ENCODE measurements at regions of chr5 and their contacts with region 1.

Region 1: DNA sequence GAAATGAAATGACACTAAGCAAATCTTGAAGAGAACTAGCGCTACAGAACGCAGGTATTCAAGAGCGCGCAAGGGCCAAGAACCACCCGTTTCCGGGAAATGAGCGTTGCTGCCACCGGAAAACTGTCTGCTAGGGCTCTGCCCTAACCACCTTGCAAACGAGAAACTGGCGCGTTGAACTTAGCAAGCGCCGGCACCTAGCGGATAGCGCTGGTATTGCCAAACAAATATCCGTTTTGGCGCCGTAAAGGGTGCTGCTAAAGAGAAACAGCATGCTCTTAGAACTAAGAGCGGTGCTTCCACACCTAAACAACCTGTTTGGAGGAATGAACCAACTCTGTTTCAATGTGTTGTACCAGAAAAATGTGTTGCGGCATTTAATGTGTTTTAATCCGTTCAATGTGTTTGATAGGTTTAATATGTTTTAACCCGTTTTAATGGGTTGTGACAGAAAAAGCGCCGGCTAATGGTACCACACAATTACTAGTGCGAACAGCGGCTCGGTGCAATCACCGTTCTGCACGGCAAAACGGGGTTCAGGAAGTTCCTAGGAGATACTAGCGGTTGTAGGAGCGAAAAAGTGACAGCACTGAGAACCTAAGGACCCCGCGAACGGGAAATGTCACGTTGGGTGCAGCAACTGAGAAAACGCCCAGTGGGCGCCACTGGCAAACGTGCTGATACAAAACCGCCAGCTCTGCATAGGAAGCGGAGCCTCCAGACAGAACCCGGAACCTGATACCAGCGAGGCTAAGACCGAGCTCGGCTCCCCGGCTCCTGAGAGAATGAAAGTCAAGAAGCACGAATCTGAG is at the start of gene ANXA2R:
- DNase-seq: peak; percentile 97
- H3K4me3 ChIP-seq: peak within 1 kb of the TSS; percentile 62
- H3K27ac ChIP-seq: peak within 1 kb of the TSS; percentile 88
- H3K4me1 ChIP-seq: no peaks in the 10 kb centered on the region
- H3K27me3 ChIP-seq: no peaks in the 10 kb centered on the region
- CTCF ChIP-seq: peak; percentile 78
- total RNA-seq, gene ANXA2R: 1.4 and 1.9 TPM in 2 replicates

Region 2: GRCh38 chr5:43019614-43020293 is 20.7 kb before region 1 on chr5:
- CTCF ChIA-PET with region 1: interaction called, 7 read pairs
- POLR2A ChIA-PET with region 1: interaction called, 15 read pairs
- intact Hi-C with region 1: loop called (anchors 2 kb)
- DNase-seq: peak; percentile 89
- H3K4me3 ChIP-seq: peak overlapping the region; percentile 81
- H3K27ac ChIP-seq: peak overlapping the region; percentile 31
- H3K4me1 ChIP-seq: peaks cover 16% of the 10 kb centered on the region
- H3K27me3 ChIP-seq: no peaks in the 10 kb centered on the region
- CTCF ChIP-seq: peak; percentile 52

Region 3: GRCh38 chr5:43120720-43121564 is 80.4 kb after region 1 on chr5 and contains the start of gene ZNF131:
- CTCF ChIA-PET with region 1: no interaction called
- POLR2A ChIA-PET with region 1: no interaction called
- intact Hi-C with region 1: loop called (anchors 1 kb)
- DNase-seq: peak; percentile 98
- H3K4me3 ChIP-seq: peak within 1 kb of the TSS; percentile 56
- H3K27ac ChIP-seq: peak within 1 kb of the TSS; percentile 90
- H3K4me1 ChIP-seq: peaks cover 23% of the 10 kb centered on the region
- H3K27me3 ChIP-seq: no peaks in the 10 kb centered on the region
- CTCF ChIP-seq: no peak
- total RNA-seq, gene ZNF131: 43.6 and 45.0 TPM in 2 replicates

Region 4: DNA sequence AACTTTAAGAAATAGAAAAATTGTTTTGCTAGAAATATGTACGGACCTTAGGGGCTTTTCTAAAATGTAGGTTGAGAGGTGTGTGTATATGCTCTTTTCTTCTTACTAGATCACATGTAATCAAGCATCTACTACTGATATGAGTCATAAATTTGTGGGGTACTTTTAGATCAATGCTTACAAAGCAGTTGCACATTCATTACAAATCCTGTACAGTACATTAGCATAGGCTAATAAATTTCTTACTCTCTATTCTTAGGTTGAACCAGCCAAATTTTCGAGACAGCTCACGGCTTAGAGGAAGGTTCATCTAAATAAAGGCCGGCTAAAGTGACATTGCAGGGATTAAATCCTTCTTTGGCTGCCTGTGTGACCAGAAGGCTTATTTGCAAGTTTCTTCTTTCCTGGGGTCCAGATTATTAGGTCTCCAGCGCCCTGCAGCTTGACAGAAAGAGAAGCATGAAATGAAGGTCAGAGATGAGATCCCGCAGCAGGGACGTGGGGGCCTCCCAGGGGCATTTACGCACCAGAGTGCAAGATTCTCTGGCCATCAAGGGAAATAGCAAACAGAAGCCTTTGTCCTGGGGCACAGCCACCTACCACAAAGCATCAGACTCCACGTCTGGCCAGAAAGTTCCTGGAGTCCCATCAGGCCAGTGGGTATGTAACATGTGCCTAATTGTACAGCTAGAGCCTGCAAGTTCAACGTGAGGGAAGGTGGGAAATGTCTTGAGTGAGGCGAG is 204.5 kb after region 1 on chr5:
- CTCF ChIA-PET with region 1: no interaction called
- POLR2A ChIA-PET with region 1: no interaction called
- intact Hi-C with region 1: no loop called
- DNase-seq: no peak
- H3K4me3 ChIP-seq: no peak overlapping the region
- H3K27ac ChIP-seq: no peak overlapping the region
- H3K4me1 ChIP-seq: no peaks in the 10 kb centered on the region
- H3K27me3 ChIP-seq: peaks cover 9% of the 10 kb centered on the region
- CTCF ChIP-seq: no peak

Measured in A673 (cell line).